H1 (cell line): ENCODE measurements at regions of chr7 and their contacts with region 1.

Region 1: DNA sequence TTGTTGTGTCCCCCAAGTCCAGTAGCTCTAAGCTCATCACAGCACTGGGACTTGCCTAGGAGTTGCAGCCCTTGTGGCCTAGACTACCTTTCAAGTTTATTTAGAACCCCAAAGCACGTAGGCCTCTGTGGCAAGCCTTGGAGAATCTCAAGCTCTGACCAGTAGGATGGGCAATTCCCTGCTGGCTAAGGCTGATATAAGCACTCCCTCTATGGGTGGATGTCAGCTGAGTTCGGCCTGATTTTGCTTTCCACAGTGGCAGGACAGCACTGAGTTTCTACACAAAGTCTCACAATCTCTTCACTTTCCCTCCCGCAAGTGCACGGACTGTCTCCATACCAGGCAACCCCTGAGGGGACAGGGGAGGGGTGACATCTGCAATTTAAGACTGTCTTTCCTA is 886.4 kb upstream of the LRRN3 start:
- DNase-seq: peak; percentile 7 to 47
- H3K4me3 ChIP-seq: no peak overlapping the region
- H3K27ac ChIP-seq: no peak overlapping the region
- H3K4me1 ChIP-seq: no peaks in the 10 kb centered on the region
- H3K27me3 ChIP-seq: no peaks in the 10 kb centered on the region
- CTCF ChIP-seq: peak; percentile 58 to 86 (median 85)
- EP300 ChIP-seq: no peak
- POLR2A ChIP-seq: no peak
- RAD21 ChIP-seq: peak; percentile 86 to 88

Region 2: GRCh38 chr7:109844362-109844761 is 360.2 kb before region 1 on chr7:
- CTCF ChIA-PET with region 1: interaction called, 10 read pairs
- POLR2A ChIA-PET with region 1: no interaction called
- DNase-seq: no peak
- H3K4me3 ChIP-seq: no peak overlapping the region
- H3K27ac ChIP-seq: no peak overlapping the region
- H3K4me1 ChIP-seq: peaks cover 0 to 4% (median under 1%) of the 10 kb centered on the region in 4 experiments; a peak in 1 of 7 replicates
- H3K27me3 ChIP-seq: peaks cover 0 to under 1% (median 0%) of the 10 kb centered on the region in 4 experiments; a peak in 1 of 7 replicates
- CTCF ChIP-seq: peak in 2 of 3 experiments; percentile 25 to 53; a peak in 2 of 4 replicates
- EP300 ChIP-seq: no peak
- POLR2A ChIP-seq: no peak
- RAD21 ChIP-seq: peak; percentile 79 to 84

Region 3: GRCh38 chr7:110170841-110171240 is 33.7 kb before region 1 on chr7:
- CTCF ChIA-PET with region 1: no interaction called
- POLR2A ChIA-PET with region 1: no interaction called
- DNase-seq: no peak
- H3K4me3 ChIP-seq: no peak overlapping the region
- H3K27ac ChIP-seq: no peak overlapping the region
- H3K4me1 ChIP-seq: no peaks in the 10 kb centered on the region
- H3K27me3 ChIP-seq: no peaks in the 10 kb centered on the region
- CTCF ChIP-seq: no peak
- EP300 ChIP-seq: no peak
- POLR2A ChIP-seq: no peak
- RAD21 ChIP-seq: no peak

Region 4: DNA sequence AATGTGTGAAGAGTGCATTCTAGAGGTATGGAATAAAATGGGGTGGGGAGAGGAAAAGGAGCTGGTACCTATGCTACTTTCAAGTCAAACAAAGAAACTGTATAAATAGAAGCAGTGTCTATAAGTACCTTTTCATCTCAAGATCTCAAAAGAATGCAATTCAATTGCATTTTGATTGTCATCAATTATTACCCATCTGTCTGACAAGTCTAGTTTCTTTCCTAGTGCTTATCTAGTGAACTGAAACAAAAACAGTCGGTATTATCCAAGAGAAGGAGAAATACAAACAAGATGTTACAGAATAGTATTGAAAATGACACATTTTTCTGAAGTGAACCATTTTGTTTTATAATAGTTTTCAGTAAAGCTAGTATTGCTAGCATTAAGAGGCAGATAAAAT is 131.9 kb after region 1 on chr7:
- CTCF ChIA-PET with region 1: no interaction called
- POLR2A ChIA-PET with region 1: no interaction called
- DNase-seq: no peak
- H3K4me3 ChIP-seq: no peak overlapping the region
- H3K27ac ChIP-seq: no peak overlapping the region
- H3K4me1 ChIP-seq: no peaks in the 10 kb centered on the region
- H3K27me3 ChIP-seq: no peaks in the 10 kb centered on the region
- CTCF ChIP-seq: no peak
- EP300 ChIP-seq: no peak
- POLR2A ChIP-seq: no peak
- RAD21 ChIP-seq: no peak